Prostate gland (tissue), 2 donors: ENCODE measurements at regions of chr10 and their contacts with region 1.

Region 1: DNA sequence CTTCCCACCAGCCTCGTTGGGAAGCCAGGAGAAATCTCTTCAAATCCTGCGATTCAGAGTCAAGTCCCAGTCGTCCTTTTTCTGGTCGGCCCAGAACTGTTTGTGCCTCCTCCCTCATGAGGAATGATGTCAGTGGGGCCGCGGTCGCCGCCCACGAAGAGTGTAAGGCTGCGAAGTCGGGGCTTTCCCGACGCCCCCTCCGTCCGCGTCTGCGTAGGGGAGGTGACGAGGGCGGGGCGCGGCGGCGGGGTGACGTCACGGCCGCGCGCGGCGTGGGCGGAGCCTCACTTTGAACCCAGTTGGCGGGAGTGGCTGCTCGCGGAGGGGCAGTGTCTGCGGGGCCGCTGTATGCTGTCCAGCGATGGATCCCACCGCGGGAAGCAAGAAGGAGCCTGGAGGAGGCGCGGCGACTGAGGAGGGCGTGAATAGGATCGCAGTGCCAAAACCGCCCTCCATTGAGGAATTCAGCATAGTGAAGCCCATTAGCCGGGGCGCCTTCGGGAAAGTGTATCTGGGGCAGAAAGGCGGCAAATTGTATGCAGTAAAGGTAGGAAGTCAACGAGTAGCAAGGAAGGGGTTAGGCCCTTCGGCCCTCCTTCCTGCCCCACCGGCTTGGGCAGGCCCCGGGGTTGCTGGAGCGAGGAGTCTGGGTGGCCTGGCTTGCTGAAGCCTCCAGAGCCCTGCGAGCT is at the start of gene MASTL:
- DNase-seq: peak; percentile 87
- H3K4me3 ChIP-seq: peak within 1 kb of the TSS; percentile 70
- H3K27ac ChIP-seq: peak within 1 kb of the TSS; percentile 98
- H3K4me1 ChIP-seq: no peaks in the 10 kb centered on the region
- H3K27me3 ChIP-seq: no peaks in the 10 kb centered on the region
- CTCF ChIP-seq: peak in 1 of 4 experiments; percentile 7
- POLR2A ChIP-seq: peak; percentile 91
- total RNA-seq, gene MASTL: 8.5 to 14.3 TPM

Region 2: GRCh38 chr10:27099916-27100812 is 55.0 kb before region 1 on chr10 and contains the start of gene ANKRD26:
- intact Hi-C with region 1: loop called (anchors 10 kb)
- DNase-seq: peak; percentile 96
- H3K4me3 ChIP-seq: peak within 1 kb of the TSS; percentile 58 to 78
- H3K27ac ChIP-seq: peak within 1 kb of the TSS; percentile 86
- H3K4me1 ChIP-seq: no peaks in the 10 kb centered on the region
- H3K27me3 ChIP-seq: no peaks in the 10 kb centered on the region
- CTCF ChIP-seq: peak in 1 of 4 experiments; percentile 24
- POLR2A ChIP-seq: peak; percentile 69
- total RNA-seq, gene ANKRD26: 5.7 to 10.5 TPM

Region 3: GRCh38 chr10:27241652-27242472 is 86.7 kb after region 1 on chr10:
- intact Hi-C with region 1: loop called (anchors 2 kb)
- DNase-seq: peak; percentile 91
- H3K4me3 ChIP-seq: peak overlapping the region; percentile 72
- H3K27ac ChIP-seq: peak overlapping the region; percentile 97
- H3K4me1 ChIP-seq: peaks cover 3% of the 10 kb centered on the region
- H3K27me3 ChIP-seq: no peaks in the 10 kb centered on the region
- CTCF ChIP-seq: peak in 3 of 4 experiments; percentile 16 to 77 (median 54)
- POLR2A ChIP-seq: peak; percentile 90

Region 4: DNA sequence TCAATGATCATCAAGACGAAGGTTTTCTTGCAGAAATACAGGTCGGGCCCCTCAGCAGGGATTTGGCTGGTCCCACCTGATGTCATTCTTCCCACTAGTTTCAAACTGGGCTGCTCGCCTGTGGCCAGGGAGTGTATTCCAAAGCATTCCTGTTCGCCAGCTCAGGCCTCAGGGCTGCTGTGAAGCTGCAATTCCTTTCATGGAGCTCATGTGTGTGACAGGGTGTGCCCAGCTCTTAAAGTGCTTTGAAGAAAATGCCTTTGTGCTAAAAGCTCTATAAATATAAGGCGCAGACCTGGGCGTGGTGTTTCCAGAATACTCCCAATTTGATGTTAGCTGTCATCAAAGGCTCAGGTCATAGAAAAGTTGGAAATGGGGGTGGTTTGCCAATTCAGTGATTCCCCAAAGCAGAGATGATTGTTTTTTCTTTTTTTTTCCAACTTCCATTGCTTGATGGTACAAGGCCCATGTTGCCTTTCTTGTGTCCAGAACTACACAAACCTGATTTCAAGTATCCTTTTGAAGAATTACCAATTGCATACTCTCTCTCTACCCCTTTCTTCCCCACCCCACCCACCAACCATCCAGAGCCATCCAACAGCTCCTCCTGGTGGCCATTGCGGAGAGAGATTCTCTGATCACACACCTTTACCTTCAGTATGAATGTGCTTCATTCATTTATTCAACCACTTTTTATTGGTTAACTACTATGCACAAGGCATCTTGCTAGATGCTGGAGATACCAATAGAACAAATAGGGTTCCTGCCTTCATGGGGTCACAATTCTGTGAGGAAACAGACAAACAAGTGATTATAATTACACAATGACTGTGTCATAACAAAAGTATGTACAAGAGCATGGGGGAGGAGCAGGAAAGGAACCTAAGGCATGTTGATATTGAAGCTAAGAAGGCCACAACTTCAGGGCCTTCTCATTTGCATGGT is 1836.4 kb after region 1 on chr10:
- intact Hi-C with region 1: no loop called
- DNase-seq: peak; percentile 6
- H3K4me3 ChIP-seq: no peak overlapping the region
- H3K27ac ChIP-seq: no peak overlapping the region
- H3K4me1 ChIP-seq: no peaks in the 10 kb centered on the region
- H3K27me3 ChIP-seq: no peaks in the 10 kb centered on the region
- CTCF ChIP-seq: peak; percentile 25 to 61 (median 56)
- POLR2A ChIP-seq: no peak